ENCODE measurements at regions of chr14 and their contacts with region 1.

Region 1: GRCh38 chr14:72828604-72829003 is 65.3 kb downstream of the DPF3 start:
- DNase-seq: no peak
- ATAC-seq: no peak
- H3K4me3 ChIP-seq: no peak overlapping the region
- H3K27ac ChIP-seq: no peak overlapping the region
- H3K4me1 ChIP-seq: peaks cover 7 to 21% of the 10 kb centered on the region in 2 experiments; a peak in 3 of 5 replicates
- H3K27me3 ChIP-seq: peaks cover 0 to 4% of the 10 kb centered on the region in 2 experiments; a peak in 1 of 5 replicates
- CTCF ChIP-seq: no peak
- EP300 ChIP-seq: no peak
- POLR2A ChIP-seq: no peak
- RAD21 ChIP-seq: no peak

Region 2: DNA sequence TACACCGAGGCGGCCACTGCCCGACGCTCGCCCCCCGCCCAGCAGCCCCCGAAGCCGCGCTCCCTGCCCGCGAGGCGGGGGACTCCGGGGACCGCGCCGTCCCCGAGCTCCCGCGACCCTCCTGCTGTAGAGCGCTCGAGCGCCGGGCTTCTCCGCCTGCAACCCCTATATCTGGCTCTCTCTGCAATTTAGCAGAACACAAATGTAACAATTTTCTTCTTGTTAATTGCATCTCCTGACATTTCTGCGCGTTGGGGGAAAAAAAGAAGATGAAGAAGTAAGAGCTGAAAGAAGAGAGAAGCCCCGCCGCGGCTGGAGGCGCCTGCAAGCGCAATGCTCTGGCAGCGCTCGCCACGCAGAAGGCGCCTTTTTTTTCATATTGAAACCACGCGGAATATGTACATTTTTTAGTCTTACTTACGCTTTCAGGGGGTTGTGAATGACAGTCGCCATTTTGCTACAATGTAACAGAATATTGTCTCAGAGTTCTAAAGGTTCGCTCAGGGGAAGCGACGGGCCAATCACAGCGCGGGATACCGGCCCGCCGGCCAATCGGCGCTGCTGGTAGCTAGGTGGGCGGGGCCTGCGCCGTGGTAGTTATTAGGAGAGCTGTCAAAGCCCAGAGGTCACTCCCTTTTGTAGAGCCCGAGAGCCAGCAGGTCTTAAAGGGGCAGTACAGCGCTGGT is 65.2 kb after region 1 on chr14 and contains the start of gene DPF3:
- CTCF ChIA-PET with region 1: no interaction called
- POLR2A ChIA-PET with region 1: interaction called, 3 read pairs
- in situ Hi-C with region 1: no loop called
- intact Hi-C with region 1: loop called (anchors 5 kb)
- DNase-seq: peak; percentile 95 to 96 (median 96)
- ATAC-seq: peak; percentile 98
- H3K4me3 ChIP-seq: peak within 1 kb of the TSS; percentile 52
- H3K27ac ChIP-seq: peak within 1 kb of the TSS; percentile 57
- H3K4me1 ChIP-seq: peaks cover 6 to 18% of the 10 kb centered on the region in 2 experiments; a peak in 4 of 5 replicates
- H3K27me3 ChIP-seq: peaks cover 0 to 9% of the 10 kb centered on the region in 2 experiments; a peak in 3 of 5 replicates
- CTCF ChIP-seq: no peak
- EP300 ChIP-seq: no peak
- POLR2A ChIP-seq: no peak
- RAD21 ChIP-seq: no peak
- polyA plus RNA-seq, gene DPF3: 0.21 to 0.25 TPM

Region 3: GRCh38 chr14:73397810-73398209 is 569.2 kb after region 1 on chr14:
- CTCF ChIA-PET with region 1: no interaction called
- POLR2A ChIA-PET with region 1: no interaction called
- in situ Hi-C with region 1: no loop called
- intact Hi-C with region 1: no loop called
- DNase-seq: no peak
- ATAC-seq: no peak
- H3K4me3 ChIP-seq: no peak overlapping the region
- H3K27ac ChIP-seq: no peak overlapping the region
- H3K4me1 ChIP-seq: no peaks in the 10 kb centered on the region
- H3K27me3 ChIP-seq: no peaks in the 10 kb centered on the region
- CTCF ChIP-seq: no peak
- EP300 ChIP-seq: no peak
- POLR2A ChIP-seq: no peak
- RAD21 ChIP-seq: no peak

Region 4: GRCh38 chr14:73428353-73428824 is 599.8 kb after region 1 on chr14:
- CTCF ChIA-PET with region 1: no interaction called
- POLR2A ChIA-PET with region 1: no interaction called
- in situ Hi-C with region 1: no loop called
- intact Hi-C with region 1: no loop called
- DNase-seq: no peak
- ATAC-seq: peak; percentile 48
- H3K4me3 ChIP-seq: no peak overlapping the region
- H3K27ac ChIP-seq: peak overlapping the region; percentile 3; the same call in 1 of the 3 replicates
- H3K4me1 ChIP-seq: peaks cover 0 to 4% of the 10 kb centered on the region in 2 experiments; a peak in 1 of 5 replicates
- H3K27me3 ChIP-seq: no peaks in the 10 kb centered on the region
- CTCF ChIP-seq: no peak
- EP300 ChIP-seq: no peak
- POLR2A ChIP-seq: no peak
- RAD21 ChIP-seq: no peak

Measured in K562 (cell line).